ENCODE measurements at regions of chr3 and their contacts with region 1.

Region 1: GRCh38 chr3:192188218-192188835 is 539.0 kb downstream of the FGF12 start:
- DNase-seq: peak; percentile 74 to 77
- H3K4me3 ChIP-seq: no peak overlapping the region
- H3K27ac ChIP-seq: no peak overlapping the region
- H3K4me1 ChIP-seq: peaks cover 0 to 3% of the 10 kb centered on the region in 2 donors
- H3K27me3 ChIP-seq: no peaks in the 10 kb centered on the region
- CTCF ChIP-seq: peak; percentile 31 to 71 (median 62)
- POLR2A ChIP-seq: no peak

Region 2: GRCh38 chr3:191915712-191916111 is 272.6 kb before region 1 on chr3:
- intact Hi-C with region 1: no loop called
- DNase-seq: no peak
- H3K4me3 ChIP-seq: no peak overlapping the region
- H3K27ac ChIP-seq: no peak overlapping the region
- H3K4me1 ChIP-seq: no peaks in the 10 kb centered on the region
- H3K27me3 ChIP-seq: no peaks in the 10 kb centered on the region
- CTCF ChIP-seq: no peak
- POLR2A ChIP-seq: no peak

Region 3: DNA sequence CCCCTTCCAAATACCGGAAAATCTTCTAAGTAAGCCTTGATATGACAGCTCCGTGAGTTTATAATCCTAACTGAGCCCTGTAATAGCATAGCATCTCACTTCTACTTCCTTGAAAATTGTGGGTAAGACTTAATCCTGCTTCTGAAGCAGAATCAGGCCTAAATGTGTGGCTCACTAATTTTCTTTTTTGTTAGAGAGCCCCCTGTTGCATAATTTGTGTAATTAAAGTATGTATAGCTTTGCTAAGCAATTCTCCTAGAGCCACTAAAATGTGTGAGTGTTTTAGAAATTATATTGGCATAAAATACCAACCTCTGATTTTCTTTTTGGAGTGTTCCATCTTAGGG is 234.6 kb after region 1 on chr3:
- intact Hi-C with region 1: loop called (anchors 10 kb)
- DNase-seq: no peak
- H3K4me3 ChIP-seq: no peak overlapping the region
- H3K27ac ChIP-seq: no peak overlapping the region
- H3K4me1 ChIP-seq: no peaks in the 10 kb centered on the region
- H3K27me3 ChIP-seq: no peaks in the 10 kb centered on the region
- CTCF ChIP-seq: peak in 3 of 6 experiments; percentile 40 to 62 (median 58)
- POLR2A ChIP-seq: no peak

Region 4: GRCh38 chr3:193129601-193130000 is 941.3 kb after region 1 on chr3:
- intact Hi-C with region 1: no loop called
- DNase-seq: peak; percentile 5 to 15
- H3K4me3 ChIP-seq: no peak overlapping the region
- H3K27ac ChIP-seq: no peak overlapping the region
- H3K4me1 ChIP-seq: no peaks in the 10 kb centered on the region
- H3K27me3 ChIP-seq: no peaks in the 10 kb centered on the region
- CTCF ChIP-seq: peak in 3 of 6 experiments; percentile 6 to 32 (median 16)
- POLR2A ChIP-seq: no peak